Heart right ventricle (tissue), 16 donors: ENCODE measurements at regions of chr4 and their contacts with region 1.

Region 1: GRCh38 chr4:144174401-144175067 is 34.0 kb upstream of the GYPA start:
- DNase-seq: no peak
- ATAC-seq: peak in 7 of 8 donors; percentile 19 to 76 (median 50)
- H3K4me3 ChIP-seq: no peak overlapping the region
- H3K27ac ChIP-seq: no peak overlapping the region
- H3K4me1 ChIP-seq: peaks cover 0 to 5% (median 0%) of the 10 kb centered on the region in 9 donors
- H3K27me3 ChIP-seq: no peaks in the 10 kb centered on the region
- CTCF ChIP-seq: peak in 8 of 9 donors; percentile 27 to 70 (median 56)

Region 2: GRCh38 chr4:144104509-144105130 is 69.9 kb before region 1 on chr4:
- intact Hi-C with region 1: no loop called
- DNase-seq: no peak
- ATAC-seq: no peak
- H3K4me3 ChIP-seq: no peak overlapping the region
- H3K27ac ChIP-seq: no peak overlapping the region
- H3K4me1 ChIP-seq: no peaks in the 10 kb centered on the region
- H3K27me3 ChIP-seq: no peaks in the 10 kb centered on the region
- CTCF ChIP-seq: no peak

Region 3: DNA sequence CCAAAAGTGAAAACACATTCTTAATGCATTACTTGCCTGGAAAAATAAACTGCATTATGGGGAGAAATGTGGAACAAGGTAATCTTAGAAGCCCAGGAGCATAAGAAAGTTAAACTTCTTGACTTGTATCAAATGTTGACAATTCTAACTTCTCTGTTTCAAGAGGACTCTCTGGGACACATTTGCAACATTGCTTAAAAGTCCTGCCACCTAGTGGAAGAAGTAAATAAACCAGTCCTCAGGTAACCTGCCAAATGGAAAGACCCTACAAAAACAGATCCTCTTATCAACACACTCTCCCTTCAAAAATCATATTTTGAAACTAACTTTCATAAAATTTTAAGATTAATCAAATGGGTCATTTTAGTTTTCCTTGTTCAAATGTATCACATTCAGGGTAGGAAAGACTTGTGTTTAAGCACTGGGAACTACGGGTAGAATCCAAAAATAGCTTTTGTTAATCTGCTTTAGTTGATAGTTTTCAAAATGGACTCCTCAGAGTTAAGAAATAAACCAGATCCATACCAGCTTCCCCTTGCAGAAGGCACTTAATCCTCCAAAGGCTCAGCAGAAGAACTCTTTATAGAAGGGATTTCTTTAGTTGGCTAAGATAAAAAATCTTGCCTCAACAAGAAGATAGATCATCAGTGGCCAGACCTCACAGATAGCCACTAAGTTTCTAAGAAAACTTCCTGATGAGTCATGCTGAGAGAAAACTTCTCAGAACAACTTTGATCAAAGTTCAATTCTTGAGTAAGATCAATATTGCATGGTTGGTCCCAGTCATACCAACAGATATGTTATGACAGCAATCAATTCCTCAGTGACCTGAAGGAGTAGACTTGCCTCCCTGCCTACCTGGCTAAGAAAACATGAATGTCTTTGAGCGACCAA is 613.1 kb after region 1 on chr4:
- intact Hi-C with region 1: loop called in 3 of 10 experiments (anchors 5 to 10 kb)
- DNase-seq: no peak
- ATAC-seq: no peak
- H3K4me3 ChIP-seq: no peak overlapping the region
- H3K27ac ChIP-seq: no peak overlapping the region
- H3K4me1 ChIP-seq: no peaks in the 10 kb centered on the region
- H3K27me3 ChIP-seq: no peaks in the 10 kb centered on the region
- CTCF ChIP-seq: peak in 8 of 9 donors; percentile 31 to 67 (median 52)

Region 4: DNA sequence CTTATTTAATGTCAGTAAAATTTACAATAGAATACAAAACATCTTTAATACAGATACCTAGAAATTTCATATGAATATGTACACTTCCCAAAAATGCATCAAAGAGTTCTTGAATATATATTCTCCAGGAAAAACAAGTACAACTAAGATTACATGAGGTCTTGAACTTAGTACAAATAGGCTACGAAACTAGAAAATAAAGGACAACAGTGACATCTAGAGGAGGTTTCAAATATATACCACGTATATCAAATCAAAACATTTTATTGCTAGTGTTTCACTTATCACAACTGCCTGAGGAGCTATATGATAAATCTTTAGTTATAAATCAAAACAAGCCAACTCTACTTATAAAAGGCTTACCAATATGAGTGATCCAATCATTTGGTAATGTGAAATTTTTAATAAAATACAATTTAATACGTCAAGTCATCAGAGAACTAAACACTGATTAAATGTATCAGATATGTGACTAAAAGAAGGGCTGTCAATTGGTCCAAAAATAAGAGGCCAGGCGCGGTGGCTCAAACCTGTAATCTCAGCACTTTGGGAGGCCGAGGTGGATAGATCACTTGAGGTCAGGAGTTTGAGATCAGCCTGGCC is 886.9 kb after region 1 on chr4:
- intact Hi-C with region 1: loop called in 9 of 10 experiments (anchors 2 to 10 kb)
- DNase-seq: no peak
- ATAC-seq: peak in 1 of 8 donors; percentile 51
- H3K4me3 ChIP-seq: no peak overlapping the region
- H3K27ac ChIP-seq: no peak overlapping the region
- H3K4me1 ChIP-seq: peaks cover 0 to 13% (median 0%) of the 10 kb centered on the region in 9 donors
- H3K27me3 ChIP-seq: no peaks in the 10 kb centered on the region
- CTCF ChIP-seq: peak; percentile 20 to 67 (median 56)

Region 5: DNA sequence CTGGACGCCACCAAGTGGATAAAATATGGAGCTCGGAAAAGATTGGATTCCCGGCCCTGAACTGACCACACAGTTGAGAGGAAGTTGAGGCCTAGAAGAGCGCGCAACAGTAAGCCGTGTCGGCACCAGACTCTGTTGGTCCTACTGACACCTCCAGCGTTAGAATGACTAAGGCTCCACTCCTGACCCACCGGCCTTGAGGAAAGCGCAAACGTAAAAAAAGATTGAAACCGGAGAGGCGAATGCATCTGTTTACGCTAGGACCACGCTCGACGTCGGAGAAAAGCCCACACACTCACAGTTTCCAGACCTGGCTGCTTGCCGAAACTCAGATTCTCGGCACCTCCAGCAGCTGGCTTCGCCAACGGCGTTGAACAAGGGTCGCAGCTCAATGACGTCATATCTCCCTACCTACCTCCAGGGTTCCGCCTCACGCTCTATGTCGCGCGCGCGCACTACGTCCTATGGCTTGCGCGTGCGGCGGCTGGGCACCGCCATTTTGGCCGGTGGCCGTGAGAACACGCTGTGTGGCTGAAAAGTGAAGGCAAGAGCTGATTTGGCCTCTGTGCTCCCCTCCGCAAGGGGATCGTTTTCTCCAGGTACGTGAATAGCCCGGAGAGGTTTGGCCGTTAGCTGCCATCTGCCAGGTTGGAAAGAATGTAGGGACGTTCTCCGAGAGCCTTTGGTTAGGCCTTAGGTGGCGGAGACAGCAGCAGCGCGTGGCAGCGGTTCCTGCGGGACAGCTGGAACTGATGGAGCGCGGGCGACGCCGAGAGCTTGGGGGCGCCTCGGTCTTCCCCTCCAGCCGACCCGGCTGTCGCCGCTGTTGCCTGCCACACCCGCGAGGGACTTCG is 923.5 kb after region 1 on chr4 and contains the starts of genes ABCE1 and ANAPC10:
- intact Hi-C with region 1: loop called in 2 of 10 experiments (anchors 10 kb)
- DNase-seq: peak; percentile 90 to 97
- ATAC-seq: peak; percentile 97 to 99 (median 98)
- H3K4me3 ChIP-seq: peak within 1 kb of the TSS; percentile 50 to 91 (median 78)
- H3K27ac ChIP-seq: peak within 1 kb of the TSS; percentile 73 to 95 (median 91)
- H3K4me1 ChIP-seq: peaks cover 3 to 60% (median 45%) of the 10 kb centered on the region in 9 donors
- H3K27me3 ChIP-seq: no peaks in the 10 kb centered on the region
- CTCF ChIP-seq: peak in 6 of 9 donors; percentile 14 to 54 (median 42)
- total RNA-seq, gene ABCE1: 26.0 to 49.0 (median 33.7) TPM
- total RNA-seq, gene ANAPC10: 10.3 to 23.0 (median 15.3) TPM